Activated B cell treated with CpG ODN at 0.5 μM for 24 hours (primary cell): ENCODE measurements at regions of chr2 and their contacts with region 1.

Region 1: DNA sequence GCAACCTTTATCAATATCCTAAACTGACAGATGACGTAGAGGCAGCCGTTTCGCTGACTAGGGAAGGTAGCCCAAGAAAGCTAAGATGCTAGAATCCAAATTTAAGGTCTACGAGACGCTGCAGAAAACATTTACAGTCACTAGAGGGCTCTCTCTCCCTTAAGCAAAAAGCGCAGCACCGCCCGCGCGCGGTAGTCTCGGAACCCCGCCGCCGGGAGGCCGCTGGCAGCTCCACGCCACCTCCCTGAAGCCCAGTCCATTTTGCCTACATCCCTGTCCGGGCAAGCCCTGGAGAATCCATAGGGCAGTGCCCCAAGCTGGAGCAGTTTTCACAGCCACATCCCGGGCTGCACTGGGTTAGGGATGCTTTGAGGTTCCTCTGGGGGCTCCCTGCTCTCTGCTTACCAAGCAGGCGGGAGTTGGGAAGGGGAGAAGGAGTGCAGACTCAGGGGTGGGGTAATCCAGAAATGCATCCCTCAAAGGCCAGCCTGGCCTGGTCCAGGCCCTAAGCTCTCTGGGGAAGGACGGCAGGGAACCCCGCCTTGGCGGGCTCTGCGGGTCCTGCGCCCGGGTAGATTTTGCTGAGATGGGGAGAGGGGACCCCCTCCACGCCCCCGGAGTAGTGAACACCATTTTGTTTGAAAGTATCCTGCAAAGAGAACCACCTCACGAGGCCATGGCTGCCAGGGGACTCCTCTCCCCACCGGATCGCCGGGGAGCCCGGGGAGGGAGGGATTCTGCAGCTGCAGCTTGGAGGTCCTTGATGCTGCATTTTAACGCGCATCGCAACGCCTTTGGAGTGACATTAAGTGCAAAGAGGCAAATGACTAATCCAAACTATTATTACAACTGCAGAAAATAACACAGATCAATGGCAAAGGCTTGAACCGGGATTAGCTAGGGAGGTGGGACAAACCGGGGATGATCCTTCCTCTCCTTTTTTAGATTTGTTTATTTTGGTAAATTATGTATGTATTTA is 1.3 kb upstream of the DPYSL5 start:
- DNase-seq: peak; percentile 54
- ATAC-seq: peak; percentile 71
- H3K4me3 Mint-ChIP-seq: peak overlapping the region; percentile 77
- H3K27ac Mint-ChIP-seq: no peak overlapping the region
- H3K4me1 Mint-ChIP-seq: peaks cover 20% of the 10 kb centered on the region
- H3K27me3 Mint-ChIP-seq: peaks cover 47% of the 10 kb centered on the region
- CTCF ChIP-seq: no peak

Region 2: GRCh38 chr2:26785431-26786206 is 61.0 kb before region 1 on chr2 and contains the start of gene CENPA:
- CTCF ChIA-PET with region 1: no interaction called
- POLR2A ChIA-PET with region 1: no interaction called
- intact Hi-C with region 1: no loop called
- DNase-seq: peak; percentile 87
- ATAC-seq: peak; percentile 99
- H3K4me3 Mint-ChIP-seq: peak within 1 kb of the TSS; percentile 84
- H3K27ac Mint-ChIP-seq: peak within 1 kb of the TSS; percentile 65
- H3K4me1 Mint-ChIP-seq: peaks cover 15% of the 10 kb centered on the region
- H3K27me3 Mint-ChIP-seq: peaks cover 3% of the 10 kb centered on the region
- CTCF ChIP-seq: no peak
- total RNA-seq, gene CENPA: 0.42 TPM in 2 replicates

Region 3: GRCh38 chr2:26922405-26923188 is 76.0 kb after region 1 on chr2:
- CTCF ChIA-PET with region 1: interaction called, 50 read pairs
- POLR2A ChIA-PET with region 1: interaction called, 7 read pairs
- intact Hi-C with region 1: loop called (anchors 1 kb)
- DNase-seq: no peak
- ATAC-seq: peak; percentile 77
- H3K4me3 Mint-ChIP-seq: no peak overlapping the region
- H3K27ac Mint-ChIP-seq: no peak overlapping the region
- H3K4me1 Mint-ChIP-seq: peaks cover 6% of the 10 kb centered on the region
- H3K27me3 Mint-ChIP-seq: peaks cover 23% of the 10 kb centered on the region
- CTCF ChIP-seq: no peak

Region 4: GRCh38 chr2:26942543-26943295 is 96.1 kb after region 1 on chr2:
- CTCF ChIA-PET with region 1: interaction called, 38 read pairs
- POLR2A ChIA-PET with region 1: no interaction called
- intact Hi-C with region 1: loop called (anchors 1 kb)
- DNase-seq: peak; percentile 56
- ATAC-seq: no peak
- H3K4me3 Mint-ChIP-seq: no peak overlapping the region
- H3K27ac Mint-ChIP-seq: no peak overlapping the region
- H3K4me1 Mint-ChIP-seq: no peaks in the 10 kb centered on the region
- H3K27me3 Mint-ChIP-seq: peaks cover 12% of the 10 kb centered on the region
- CTCF ChIP-seq: no peak

Region 5: DNA sequence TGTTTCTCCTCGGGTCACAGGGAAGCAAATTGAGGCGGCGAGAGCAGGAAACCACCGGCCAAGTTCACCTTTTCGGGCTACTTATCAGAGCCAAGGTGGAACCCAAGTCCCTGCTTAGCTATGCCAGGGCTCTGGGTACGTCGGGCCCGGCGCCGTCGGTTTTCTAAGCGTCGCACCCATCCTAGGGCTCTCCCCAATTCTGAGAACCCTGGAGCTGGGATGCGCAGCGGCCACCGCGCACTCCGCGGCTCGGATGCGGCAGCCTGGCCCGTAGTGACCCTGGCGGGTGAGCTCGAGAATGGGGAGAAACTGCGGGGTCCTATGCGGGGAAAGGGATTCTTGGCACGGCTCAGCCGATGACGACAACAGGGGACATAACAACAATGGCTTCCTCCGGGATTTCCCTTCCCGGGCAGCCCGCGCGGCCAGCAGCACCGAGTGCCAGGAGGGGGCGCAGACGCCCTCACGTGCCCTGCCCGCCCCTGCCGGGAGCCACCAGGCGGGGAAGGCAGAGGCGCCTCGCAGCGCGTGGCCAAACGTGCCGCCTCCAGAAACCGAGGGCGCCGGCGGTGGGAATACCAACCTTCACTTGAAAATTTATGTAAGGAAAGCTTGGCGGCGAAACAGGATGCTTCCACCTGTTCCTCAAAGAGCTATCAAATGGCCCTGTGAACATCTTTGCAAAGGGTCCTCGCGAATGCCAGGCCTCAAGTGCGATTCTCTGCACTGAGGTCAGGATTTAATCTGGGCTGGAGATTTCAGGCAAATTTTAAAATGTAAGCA is 418.3 kb after region 1 on chr2:
- CTCF ChIA-PET with region 1: no interaction called
- POLR2A ChIA-PET with region 1: no interaction called
- intact Hi-C with region 1: no loop called
- DNase-seq: peak; percentile 68
- ATAC-seq: peak; percentile 73
- H3K4me3 Mint-ChIP-seq: peak overlapping the region; percentile 88
- H3K27ac Mint-ChIP-seq: no peak overlapping the region
- H3K4me1 Mint-ChIP-seq: peaks cover 33% of the 10 kb centered on the region
- H3K27me3 Mint-ChIP-seq: peaks cover 44% of the 10 kb centered on the region
- CTCF ChIP-seq: no peak